ENCODE measurements at regions of chr9 and their contacts with region 1.

Region 1: GRCh38 chr9:134178768-134179551 is 14.6 kb upstream of the RNU6ATAC start:
- DNase-seq: no peak
- H3K4me3 Mint-ChIP-seq: no peak overlapping the region
- H3K27ac Mint-ChIP-seq: peak overlapping the region; percentile 18
- H3K4me1 Mint-ChIP-seq: peaks cover 13% of the 10 kb centered on the region
- H3K27me3 Mint-ChIP-seq: no peaks in the 10 kb centered on the region

Region 2: GRCh38 chr9:134293611-134294165 is 114.7 kb after region 1 on chr9:
- intact Hi-C with region 1: no loop called
- DNase-seq: no peak
- H3K4me3 Mint-ChIP-seq: no peak overlapping the region
- H3K27ac Mint-ChIP-seq: no peak overlapping the region
- H3K4me1 Mint-ChIP-seq: no peaks in the 10 kb centered on the region
- H3K27me3 Mint-ChIP-seq: no peaks in the 10 kb centered on the region

Region 3: DNA sequence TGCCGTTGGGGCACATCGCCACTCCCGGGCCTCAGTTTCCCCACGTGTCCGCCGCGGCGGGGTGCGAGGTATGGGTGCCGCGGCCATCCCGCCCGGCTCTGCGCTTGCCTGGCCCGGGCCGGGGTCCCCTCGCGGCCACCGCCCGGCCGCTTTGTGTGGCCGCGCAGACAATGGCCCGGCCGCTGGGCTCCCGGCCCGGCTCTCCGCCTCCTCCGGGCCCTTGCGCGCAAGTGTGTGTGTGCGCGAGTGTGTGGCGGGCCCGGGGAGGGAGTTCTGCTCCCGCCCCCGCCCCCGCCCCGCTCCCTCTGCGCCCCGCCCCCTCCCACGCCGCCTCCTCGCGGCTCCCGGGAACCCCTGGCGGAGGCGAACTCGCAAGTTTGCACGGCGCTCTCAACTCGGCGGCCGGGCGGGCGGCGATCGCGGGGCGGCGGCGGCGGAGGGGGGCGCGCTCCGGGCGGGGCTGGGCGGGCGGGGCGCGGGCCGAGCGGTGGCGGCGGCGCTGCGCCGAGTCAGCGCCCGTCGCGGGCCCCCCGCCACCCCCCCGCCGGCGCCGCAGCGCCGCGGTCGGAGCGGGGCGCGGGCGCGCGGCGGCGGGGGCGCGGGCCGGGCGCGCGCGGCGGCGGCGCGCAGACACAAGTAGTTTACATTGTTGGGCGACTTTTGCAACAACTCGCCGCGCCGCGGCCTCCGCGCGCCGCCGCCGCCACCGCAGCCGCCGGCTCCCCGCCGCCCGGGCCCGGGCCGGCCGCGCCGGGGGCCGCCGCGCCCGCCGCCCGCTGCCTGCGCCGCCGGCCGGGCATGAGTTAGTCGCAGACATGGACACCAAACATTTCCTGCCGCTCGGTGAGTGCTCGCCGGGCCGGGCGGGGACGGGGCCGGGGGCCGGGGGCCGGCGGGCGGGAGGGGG is 147.1 kb after region 1 on chr9 and contains the start of gene RXRA:
- intact Hi-C with region 1: loop called (anchors 10 kb)
- DNase-seq: peak; percentile 80
- H3K4me3 Mint-ChIP-seq: peak within 1 kb of the TSS; percentile 73
- H3K27ac Mint-ChIP-seq: no peak within 1 kb of the TSS
- H3K4me1 Mint-ChIP-seq: peaks cover 7% of the 10 kb centered on the region
- H3K27me3 Mint-ChIP-seq: peaks cover 34% of the 10 kb centered on the region
- total RNA-seq, gene RXRA: 4.0 and 4.8 TPM in 2 replicates

Region 4: DNA sequence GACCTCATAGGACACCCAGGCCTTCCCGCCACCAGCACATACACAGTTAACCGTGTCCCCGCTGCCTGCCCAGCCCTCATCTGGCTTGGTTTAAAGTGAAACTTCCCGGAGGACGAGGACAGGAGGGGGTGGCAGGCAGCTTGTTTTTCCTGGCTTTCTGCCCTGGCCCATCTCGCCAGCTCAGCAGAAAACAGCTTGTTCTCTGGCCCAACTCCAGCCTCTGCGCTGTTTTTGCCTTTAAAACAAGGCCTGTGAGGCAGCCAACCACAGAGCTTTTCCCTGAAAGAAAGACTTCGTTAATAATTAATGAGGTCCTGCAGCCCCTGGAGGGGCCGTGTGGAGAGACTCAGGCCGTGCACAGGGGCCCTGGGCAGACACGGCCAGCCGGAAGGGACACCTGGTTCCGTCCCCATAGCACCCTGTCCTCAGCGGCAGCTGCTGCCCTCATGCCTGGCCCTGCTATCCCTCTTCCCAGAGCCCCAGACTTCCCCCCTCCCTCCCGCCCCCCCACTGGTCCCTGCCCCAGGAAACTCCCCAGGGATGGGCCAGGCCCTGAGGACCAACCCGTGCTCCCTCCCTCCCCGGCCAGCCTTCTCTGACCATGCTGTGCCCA is 256.0 kb after region 1 on chr9:
- intact Hi-C with region 1: no loop called
- DNase-seq: no peak
- H3K4me3 Mint-ChIP-seq: no peak overlapping the region
- H3K27ac Mint-ChIP-seq: no peak overlapping the region
- H3K4me1 Mint-ChIP-seq: no peaks in the 10 kb centered on the region
- H3K27me3 Mint-ChIP-seq: no peaks in the 10 kb centered on the region